ENCODE measurements at regions of chr9 and their contacts with region 1.

Region 1: DNA sequence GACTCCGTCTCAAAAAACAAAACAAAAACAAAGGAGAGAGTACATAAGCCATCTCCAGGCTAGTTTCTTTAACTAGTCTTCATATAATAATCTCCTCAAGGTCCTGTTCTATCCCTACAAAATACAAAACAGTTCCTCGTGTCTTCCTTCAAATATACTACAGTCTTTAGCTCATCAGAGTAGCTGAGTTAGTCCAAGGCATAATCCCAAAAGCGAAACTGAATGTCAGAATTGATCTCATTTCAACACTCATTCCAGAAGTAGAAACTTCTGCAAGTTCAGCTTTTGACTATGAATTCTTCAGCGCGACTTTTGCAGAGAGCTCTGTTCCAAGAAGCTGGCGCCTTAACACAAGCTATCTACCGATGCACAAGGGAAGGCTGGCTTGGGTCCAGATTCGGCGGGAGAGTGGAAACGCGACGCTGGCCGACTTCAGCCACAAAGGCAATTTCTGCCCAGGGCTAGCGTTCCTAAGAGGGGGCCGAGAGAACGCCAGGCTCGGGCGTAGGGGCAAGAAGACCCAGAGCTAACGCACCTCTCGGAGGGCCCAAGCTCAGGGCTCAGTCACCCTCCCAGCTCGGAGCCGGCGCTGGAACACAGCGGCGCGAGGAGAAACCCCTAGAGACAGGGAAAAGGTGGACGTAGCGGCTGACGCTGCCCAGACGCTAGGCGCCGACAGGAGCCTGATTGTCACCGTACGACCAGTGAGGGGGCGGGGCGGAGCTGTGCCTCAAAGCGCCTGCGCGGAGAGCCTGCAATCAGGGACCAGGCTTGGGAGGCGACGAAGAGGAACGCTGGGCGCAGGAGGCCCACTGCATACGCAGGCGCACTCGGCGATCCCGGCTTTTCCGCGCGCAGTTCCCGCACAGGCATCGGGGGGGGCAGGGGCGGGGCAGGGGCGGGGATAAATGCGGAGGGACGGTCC is 469 bp upstream of the HSDL2 start:
- DNase-seq: peak; percentile 97 to 100 (median 99)

Region 2: GRCh38 chr9:111896353-111896958 is 483.0 kb before region 1 on chr9 and contains the start of gene UGCG:
- intact Hi-C with region 1: loop called (anchors 5 kb)
- DNase-seq: peak; percentile 72 to 99 (median 86)

Region 3: GRCh38 chr9:112074250-112075008 is 305.0 kb before region 1 on chr9:
- intact Hi-C with region 1: no loop called
- DNase-seq: peak in 6 of 10 donors; percentile 50 to 86 (median 56)

Region 4: GRCh38 chr9:112333639-112334431 is 45.6 kb before region 1 on chr9:
- intact Hi-C with region 1: loop called (anchors 2 kb)
- DNase-seq: peak in 9 of 10 donors; percentile 82 to 99 (median 88)

Region 5: GRCh38 chr9:112486221-112487007 is 107.0 kb after region 1 on chr9 and contains the start of gene KIAA1958:
- intact Hi-C with region 1: loop called (anchors 2 kb)
- DNase-seq: peak; percentile 65 to 97 (median 76)

Region 6: DNA sequence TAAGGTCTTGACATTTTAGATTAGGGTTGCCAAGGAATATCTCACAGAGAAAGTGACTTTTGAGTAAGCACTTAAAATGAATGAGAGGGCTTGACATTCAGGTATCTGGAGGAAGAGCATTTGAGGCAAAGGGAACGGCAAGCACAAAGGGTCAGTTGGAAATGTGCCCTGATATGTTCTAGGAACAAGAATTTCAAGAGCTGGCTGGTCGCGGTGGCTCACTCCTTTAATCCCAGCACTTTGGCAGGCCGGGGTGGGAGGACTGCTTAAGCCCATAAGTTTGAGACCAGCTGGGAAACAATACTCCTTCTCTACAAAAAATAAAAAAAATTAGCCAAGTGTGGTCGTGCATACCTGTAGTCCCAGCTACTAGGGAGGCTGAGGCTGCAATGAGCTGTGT is 123.7 kb after region 1 on chr9:
- intact Hi-C with region 1: no loop called
- DNase-seq: no peak

Region 7: DNA sequence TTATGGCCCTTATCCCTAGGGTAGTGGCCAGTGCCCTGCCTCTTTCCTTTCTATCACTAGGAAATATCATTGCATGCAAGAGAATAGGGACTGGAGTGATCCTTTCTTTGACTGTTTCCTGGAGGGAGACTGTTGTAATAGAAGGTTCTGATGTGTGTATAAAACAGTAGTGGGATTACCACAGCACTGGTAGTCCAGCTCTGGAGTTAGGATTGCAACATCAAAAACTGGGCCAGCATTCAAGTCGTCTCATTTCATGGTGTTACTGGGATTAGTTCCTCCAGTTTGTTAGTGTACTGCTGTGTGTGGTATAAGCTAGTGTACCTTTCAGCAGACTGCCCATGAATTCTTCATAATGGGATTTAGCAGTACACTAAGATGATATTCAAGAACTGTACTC is 153.0 kb after region 1 on chr9:
- intact Hi-C with region 1: no loop called
- DNase-seq: no peak

Region 8: GRCh38 chr9:112717661-112718341 is 338.4 kb after region 1 on chr9 and contains the start of gene INIP:
- intact Hi-C with region 1: loop called (anchors 5 kb)
- DNase-seq: peak; percentile 96 to 100 (median 96)

Measured in posterior cingulate gyrus (tissue), 11 donors.